ENCODE measurements at regions of chr11 and their contacts with region 1.

Region 1: GRCh38 chr11:10208131-10208575 is 85.9 kb downstream of the SBF2 start:
- DNase-seq: peak; percentile 54
- CTCF ChIP-seq: peak; percentile 61

Region 2: GRCh38 chr11:10314199-10315072 is 106.3 kb after region 1 on chr11:
- in situ Hi-C with region 1: loop called (anchors 10 kb)
- DNase-seq: peak; percentile 47
- CTCF ChIP-seq: no peak